Activated B cell treated with CpG ODN at 0.5 μM for 24 hours (primary cell): ENCODE measurements at regions of chr20 and their contacts with region 1.

Region 1: GRCh38 chr20:15857173-15857784 is 716.0 kb downstream of the KIF16B start:
- DNase-seq: peak; percentile 28
- ATAC-seq: peak; percentile 74
- H3K4me3 Mint-ChIP-seq: peak overlapping the region; percentile 64
- H3K27ac Mint-ChIP-seq: peak overlapping the region; percentile 76
- H3K4me1 Mint-ChIP-seq: peaks cover 67% of the 10 kb centered on the region
- H3K27me3 Mint-ChIP-seq: no peaks in the 10 kb centered on the region
- CTCF ChIP-seq: no peak

Region 2: DNA sequence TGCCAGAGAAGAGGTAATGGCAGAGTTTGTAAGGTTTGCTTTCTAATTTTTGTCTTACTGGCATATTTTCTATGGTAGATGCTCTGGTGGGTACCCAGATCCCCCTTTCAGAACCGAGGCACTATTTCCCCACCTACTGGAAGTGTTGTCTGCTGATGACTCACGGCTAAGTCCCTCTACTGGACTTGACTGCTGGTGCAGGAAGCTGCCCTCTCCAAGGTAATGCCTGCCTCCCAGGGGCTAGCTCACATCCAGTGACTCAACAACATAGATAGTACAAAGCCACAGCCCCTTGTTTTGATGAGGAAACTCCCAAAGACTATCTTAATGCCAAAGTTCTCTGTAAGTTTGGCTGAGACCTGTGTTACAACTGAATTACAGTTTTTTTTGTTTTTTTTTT is 1234.5 kb before region 1 on chr20:
- CTCF ChIA-PET with region 1: no interaction called
- POLR2A ChIA-PET with region 1: no interaction called
- intact Hi-C with region 1: no loop called
- DNase-seq: no peak
- ATAC-seq: no peak
- H3K4me3 Mint-ChIP-seq: no peak overlapping the region
- H3K27ac Mint-ChIP-seq: no peak overlapping the region
- H3K4me1 Mint-ChIP-seq: no peaks in the 10 kb centered on the region
- H3K27me3 Mint-ChIP-seq: peaks cover 4% of the 10 kb centered on the region
- CTCF ChIP-seq: no peak

Region 3: GRCh38 chr20:15643714-15644113 is 213.6 kb before region 1 on chr20:
- CTCF ChIA-PET with region 1: no interaction called
- POLR2A ChIA-PET with region 1: no interaction called
- intact Hi-C with region 1: no loop called
- DNase-seq: no peak
- ATAC-seq: no peak
- H3K4me3 Mint-ChIP-seq: no peak overlapping the region
- H3K27ac Mint-ChIP-seq: no peak overlapping the region
- H3K4me1 Mint-ChIP-seq: no peaks in the 10 kb centered on the region
- H3K27me3 Mint-ChIP-seq: no peaks in the 10 kb centered on the region
- CTCF ChIP-seq: no peak

Region 4: GRCh38 chr20:15806105-15806504 is 51.2 kb before region 1 on chr20:
- CTCF ChIA-PET with region 1: no interaction called
- POLR2A ChIA-PET with region 1: no interaction called
- intact Hi-C with region 1: loop called (anchors 5 kb)
- DNase-seq: no peak
- ATAC-seq: no peak
- H3K4me3 Mint-ChIP-seq: peak overlapping the region; percentile 17
- H3K27ac Mint-ChIP-seq: peak overlapping the region; percentile 30
- H3K4me1 Mint-ChIP-seq: peaks cover 41% of the 10 kb centered on the region
- H3K27me3 Mint-ChIP-seq: no peaks in the 10 kb centered on the region
- CTCF ChIP-seq: no peak

Region 5: GRCh38 chr20:15867901-15868300 is 10.6 kb after region 1 on chr20:
- CTCF ChIA-PET with region 1: interaction called, 3 read pairs
- POLR2A ChIA-PET with region 1: interaction called, 5 read pairs
- intact Hi-C with region 1: loop called (anchors 2 kb)
- DNase-seq: no peak
- ATAC-seq: no peak
- H3K4me3 Mint-ChIP-seq: no peak overlapping the region
- H3K27ac Mint-ChIP-seq: no peak overlapping the region
- H3K4me1 Mint-ChIP-seq: peaks cover 6% of the 10 kb centered on the region
- H3K27me3 Mint-ChIP-seq: no peaks in the 10 kb centered on the region
- CTCF ChIP-seq: no peak

Region 6: GRCh38 chr20:15889514-15890256 is 32.4 kb after region 1 on chr20:
- CTCF ChIA-PET with region 1: no interaction called
- POLR2A ChIA-PET with region 1: no interaction called
- intact Hi-C with region 1: loop called (anchors 2 kb)
- DNase-seq: no peak
- ATAC-seq: peak; percentile 32
- H3K4me3 Mint-ChIP-seq: no peak overlapping the region
- H3K27ac Mint-ChIP-seq: peak overlapping the region; percentile 74
- H3K4me1 Mint-ChIP-seq: peaks cover 33% of the 10 kb centered on the region
- H3K27me3 Mint-ChIP-seq: no peaks in the 10 kb centered on the region
- CTCF ChIP-seq: no peak